ENCODE measurements at regions of chr16 and their contacts with region 1.

Region 1: GRCh38 chr16:88686439-88687253 is at the start of gene SNAI3:
- DNase-seq: peak; percentile 91
- ATAC-seq: peak; percentile 69
- H3K4me3 Mint-ChIP-seq: peak within 1 kb of the TSS; percentile 70
- H3K27ac Mint-ChIP-seq: peak within 1 kb of the TSS; percentile 37
- H3K4me1 Mint-ChIP-seq: peaks cover 42% of the 10 kb centered on the region
- H3K27me3 Mint-ChIP-seq: no peaks in the 10 kb centered on the region
- total RNA-seq, gene SNAI3: 3.6 to 4.1 TPM

Region 2: DNA sequence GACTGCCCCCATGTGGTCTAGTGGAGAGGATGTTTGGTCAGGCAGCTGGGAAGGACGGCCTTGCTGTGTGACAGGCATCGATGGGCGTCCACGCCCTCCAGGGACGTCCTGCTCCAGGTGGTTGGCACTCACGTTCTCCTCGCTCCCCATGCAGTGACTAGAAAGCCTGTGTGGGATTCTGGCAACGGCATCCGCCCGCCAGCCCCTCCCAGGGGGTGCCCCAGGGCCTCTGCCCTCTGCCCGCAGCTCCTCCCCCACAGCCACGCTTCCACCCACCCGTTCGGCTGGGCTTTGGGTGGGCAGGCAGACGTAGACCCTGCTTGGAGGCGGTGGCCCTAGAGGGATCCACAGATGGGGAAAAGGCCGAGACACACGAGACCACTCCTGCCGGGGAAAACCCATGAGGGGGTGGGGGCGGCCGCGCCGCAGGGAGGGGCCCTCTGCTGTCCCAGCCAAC is 52.9 kb before region 1 on chr16:
- CTCF ChIA-PET with region 1: interaction called, 4 read pairs
- POLR2A ChIA-PET with region 1: no interaction called
- intact Hi-C with region 1: loop called in 1 of 2 experiments (anchors 1 kb)
- DNase-seq: peak; percentile 81
- ATAC-seq: peak; percentile 53
- H3K4me3 Mint-ChIP-seq: peak overlapping the region; percentile 56
- H3K27ac Mint-ChIP-seq: no peak overlapping the region
- H3K4me1 Mint-ChIP-seq: peaks cover 38% of the 10 kb centered on the region
- H3K27me3 Mint-ChIP-seq: peaks cover 16% of the 10 kb centered on the region

Region 3: GRCh38 chr16:88700636-88701482 is 14.2 kb after region 1 on chr16:
- CTCF ChIA-PET with region 1: interaction called, 7 read pairs
- POLR2A ChIA-PET with region 1: interaction called, 7 read pairs
- intact Hi-C with region 1: loop called (anchors 1 kb)
- DNase-seq: peak; percentile 98
- ATAC-seq: peak; percentile 80
- H3K4me3 Mint-ChIP-seq: peak overlapping the region; percentile 92
- H3K27ac Mint-ChIP-seq: peak overlapping the region; percentile 97
- H3K4me1 Mint-ChIP-seq: peaks cover 55% of the 10 kb centered on the region
- H3K27me3 Mint-ChIP-seq: no peaks in the 10 kb centered on the region

Region 4: DNA sequence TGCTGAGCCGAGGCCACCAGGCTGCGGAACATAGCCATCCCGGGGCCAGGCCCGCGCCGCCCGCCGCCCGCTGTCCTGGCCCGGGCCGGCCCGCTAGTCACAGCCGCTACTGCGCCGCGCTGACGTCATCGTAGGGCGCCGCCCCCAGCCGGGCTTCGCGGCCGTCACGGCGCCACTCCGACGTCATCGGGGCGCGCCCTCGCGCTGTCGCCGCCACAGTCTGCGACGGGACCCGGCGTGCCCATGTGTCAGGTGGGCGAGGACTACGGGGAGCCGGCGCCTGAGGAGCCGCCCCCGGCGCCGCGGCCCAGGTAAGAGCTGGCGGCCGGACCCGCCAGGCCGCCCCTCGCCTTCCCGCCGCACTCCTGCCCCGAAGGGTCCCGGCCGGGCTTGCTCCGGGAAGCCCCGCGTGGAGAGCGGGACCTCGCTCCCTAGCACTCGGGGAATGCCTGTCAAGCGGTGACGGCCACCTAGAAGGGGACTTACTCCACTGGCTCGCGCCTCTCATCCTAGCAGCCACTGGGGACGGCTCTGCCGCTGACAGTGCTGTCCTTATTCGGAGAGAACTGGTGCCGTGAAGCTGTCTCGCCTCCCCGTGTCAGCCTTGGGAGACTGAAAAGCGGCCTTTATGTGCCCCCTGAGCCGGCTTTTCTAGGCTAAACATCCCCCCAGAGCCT is 19.8 kb after region 1 on chr16 and contains the starts of genes CTU2 and RNF166:
- CTCF ChIA-PET with region 1: interaction called, 7 read pairs
- POLR2A ChIA-PET with region 1: interaction called, 7 read pairs
- intact Hi-C with region 1: loop called (anchors 1 kb)
- DNase-seq: peak; percentile 96
- ATAC-seq: peak; percentile 59
- H3K4me3 Mint-ChIP-seq: peak within 1 kb of the TSS; percentile 92
- H3K27ac Mint-ChIP-seq: peak within 1 kb of the TSS; percentile 92
- H3K4me1 Mint-ChIP-seq: peaks cover 43% of the 10 kb centered on the region
- H3K27me3 Mint-ChIP-seq: no peaks in the 10 kb centered on the region
- total RNA-seq, gene CTU2: 29.6 to 36.2 TPM
- total RNA-seq, gene RNF166: 44.0 to 49.7 TPM

Measured in activated CD4-positive, alpha-beta T cell treated with anti-CD3 and anti-CD28 coated beads for 36 hours (primary cell).